Pancreas (tissue), 10 donors: ENCODE measurements at regions of chr20 and their contacts with region 1.

Region 1: DNA sequence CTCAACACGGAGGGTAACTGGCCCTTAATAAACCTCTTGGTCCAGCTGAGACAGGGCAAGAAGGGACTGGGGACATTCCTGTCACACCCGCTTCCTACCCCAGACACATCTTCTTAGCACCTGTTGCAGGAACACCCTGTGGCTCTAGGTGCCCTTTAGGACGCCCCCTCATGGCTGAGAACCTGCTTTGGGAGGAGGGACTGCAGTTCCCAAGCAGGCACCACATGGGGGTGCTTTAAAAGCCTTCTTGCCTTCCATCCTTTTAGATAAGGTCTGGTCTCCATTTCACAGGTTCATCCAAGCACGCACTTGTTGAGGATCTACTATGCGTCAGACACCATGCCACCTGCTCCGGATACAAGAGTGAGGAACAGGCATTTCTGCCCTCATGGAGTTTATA is 26.6 kb downstream of the NSFL1C start:
- DNase-seq: no peak
- ATAC-seq: peak in 2 of 4 donors; percentile 22 to 40
- H3K4me3 ChIP-seq: no peak overlapping the region
- H3K27ac ChIP-seq: no peak overlapping the region
- H3K4me1 ChIP-seq: no peaks in the 10 kb centered on the region
- H3K27me3 ChIP-seq: no peaks in the 10 kb centered on the region
- CTCF ChIP-seq: no peak

Region 2: GRCh38 chr20:1313236-1313964 is 126.6 kb before region 1 on chr20:
- intact Hi-C with region 1: loop called in 2 of 3 experiments (anchors 5 to 10 kb)
- DNase-seq: peak; percentile 60 to 89 (median 77)
- ATAC-seq: peak; percentile 79 to 96 (median 93)
- H3K4me3 ChIP-seq: peak overlapping the region in 1 of 4 donors; percentile 22
- H3K27ac ChIP-seq: no peak overlapping the region
- H3K4me1 ChIP-seq: no peaks in the 10 kb centered on the region
- H3K27me3 ChIP-seq: no peaks in the 10 kb centered on the region
- CTCF ChIP-seq: peak; percentile 93 to 98 (median 97)